ENCODE measurements at regions of chr21 and their contacts with region 1.

Region 1: GRCh38 chr21:34745557-34746255 is 76.9 kb downstream of the CLIC6 start:
- DNase-seq: peak; percentile 47
- ATAC-seq: peak; percentile 95
- H3K4me3 ChIP-seq: peak overlapping the region in 1 of 2 experiments; percentile 5; a peak in 1 of 4 replicates
- H3K27ac ChIP-seq: no peak overlapping the region
- H3K4me1 ChIP-seq: peaks cover 4% of the 10 kb centered on the region
- H3K27me3 ChIP-seq: no peaks in the 10 kb centered on the region
- CTCF ChIP-seq: peak; percentile 86

Region 2: GRCh38 chr21:34330055-34330454 is 415.7 kb before region 1 on chr21:
- CTCF ChIA-PET with region 1: no interaction called
- POLR2A ChIA-PET with region 1: no interaction called
- in situ Hi-C with region 1: no loop called
- intact Hi-C with region 1: no loop called
- DNase-seq: no peak
- ATAC-seq: no peak
- H3K4me3 ChIP-seq: no peak overlapping the region
- H3K27ac ChIP-seq: no peak overlapping the region
- H3K4me1 ChIP-seq: no peaks in the 10 kb centered on the region
- H3K27me3 ChIP-seq: no peaks in the 10 kb centered on the region
- CTCF ChIP-seq: no peak

Region 3: GRCh38 chr21:34889716-34890469 is 144.2 kb after region 1 on chr21:
- CTCF ChIA-PET with region 1: interaction called, 3 read pairs
- POLR2A ChIA-PET with region 1: no interaction called
- in situ Hi-C with region 1: no loop called
- intact Hi-C with region 1: loop called (anchors 5 kb)
- DNase-seq: no peak
- ATAC-seq: peak; percentile 70
- H3K4me3 ChIP-seq: peak overlapping the region; percentile 63 to 65
- H3K27ac ChIP-seq: peak overlapping the region; percentile 63; the same call in 1 of the 2 replicates
- H3K4me1 ChIP-seq: no peaks in the 10 kb centered on the region; the same call in 1 of the 2 replicates
- H3K27me3 ChIP-seq: 0 out of 2 replicates have a peak, but pooled peaks cover 2% of the 10 kb centered on the region
- CTCF ChIP-seq: peak; percentile 91

Region 4: DNA sequence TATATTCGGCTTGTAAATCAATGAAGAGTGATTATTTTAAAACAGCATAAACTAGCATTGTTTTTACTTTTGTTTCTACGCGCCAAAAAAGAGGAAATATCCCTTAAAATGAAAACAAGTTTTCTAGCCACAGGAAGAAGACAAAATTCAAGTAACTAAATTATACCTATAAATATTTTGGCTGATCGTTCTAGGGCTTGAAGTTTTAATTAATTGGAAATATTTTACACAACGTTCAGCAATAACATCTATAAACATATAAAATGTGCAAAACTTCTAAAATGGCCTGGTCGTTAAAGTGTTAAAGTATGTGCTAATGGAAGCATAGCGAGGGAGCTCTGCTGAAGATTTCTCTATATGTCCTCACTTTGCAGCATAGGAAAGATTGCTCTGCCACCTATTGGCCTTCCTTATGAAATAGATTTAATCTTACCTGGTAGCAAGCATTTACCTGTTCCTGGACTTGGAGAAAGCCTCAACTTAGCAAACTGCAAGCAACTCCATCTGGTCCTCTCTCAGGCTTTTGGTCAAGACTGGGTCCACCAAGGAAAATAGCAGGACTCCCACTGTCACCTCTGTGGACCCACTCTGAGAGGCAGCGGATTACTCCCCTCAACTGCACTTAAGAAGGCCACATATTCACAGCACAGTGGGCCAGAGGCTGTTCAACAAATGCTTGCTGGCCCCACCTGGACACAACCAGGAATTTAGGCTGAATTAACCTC is 654.7 kb after region 1 on chr21:
- CTCF ChIA-PET with region 1: interaction called, 8 read pairs
- POLR2A ChIA-PET with region 1: no interaction called
- in situ Hi-C with region 1: no loop called
- intact Hi-C with region 1: loop called (anchors 5 kb)
- DNase-seq: peak; percentile 75
- ATAC-seq: peak; percentile 92
- H3K4me3 ChIP-seq: no peak overlapping the region
- H3K27ac ChIP-seq: no peak overlapping the region
- H3K4me1 ChIP-seq: 0 out of 2 replicates have a peak, but pooled peaks cover 4% of the 10 kb centered on the region
- H3K27me3 ChIP-seq: no peaks in the 10 kb centered on the region
- CTCF ChIP-seq: peak; percentile 63

Region 5: DNA sequence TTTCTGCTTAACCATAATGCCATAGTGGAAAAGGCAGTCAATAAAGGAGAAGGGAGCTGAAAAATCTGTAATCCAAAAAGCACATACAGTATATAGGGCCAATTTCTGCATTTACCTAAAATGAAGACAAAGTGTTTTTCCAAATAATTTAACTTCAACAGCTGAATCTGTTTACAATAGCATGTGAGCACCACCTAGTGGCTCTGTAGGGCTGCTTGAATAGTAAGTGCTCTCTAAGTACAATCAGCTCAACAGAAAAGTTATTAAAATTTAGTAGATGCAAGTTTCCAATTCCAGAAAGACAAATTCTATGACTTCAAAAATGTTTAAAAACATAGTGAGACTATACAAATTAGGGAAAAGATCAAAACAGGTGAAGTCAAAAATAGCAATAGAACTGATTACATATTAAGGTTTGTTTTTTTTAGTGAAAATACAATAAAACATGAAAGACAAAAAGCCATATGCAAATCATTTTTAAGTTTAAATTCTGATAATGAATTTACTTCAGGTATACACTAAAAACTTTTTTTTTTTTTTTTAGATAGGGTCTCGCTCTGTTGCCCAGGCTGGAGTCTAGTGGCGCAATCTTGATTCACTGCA is 1094.6 kb after region 1 on chr21:
- CTCF ChIA-PET with region 1: interaction called, 5 read pairs
- POLR2A ChIA-PET with region 1: no interaction called
- in situ Hi-C with region 1: no loop called
- intact Hi-C with region 1: loop called (anchors 10 kb)
- DNase-seq: peak; percentile 38
- ATAC-seq: 0 out of 2 replicates have a peak, but pooled peaks have one; percentile 62
- H3K4me3 ChIP-seq: no peak overlapping the region
- H3K27ac ChIP-seq: no peak overlapping the region
- H3K4me1 ChIP-seq: no peaks in the 10 kb centered on the region
- H3K27me3 ChIP-seq: no peaks in the 10 kb centered on the region
- CTCF ChIP-seq: peak; percentile 70; the same call in 1 of the 2 replicates

Measured in Panc1 (cell line).